CD4-positive, alpha-beta T cell (primary cell): ENCODE measurements at regions of chr16 and their contacts with region 1.

Region 1: GRCh38 chr16:2429034-2429770 is at the start of gene CCNF:
- DNase-seq: peak; percentile 96 to 99 (median 98)
- ATAC-seq: peak; percentile 97
- H3K4me3 ChIP-seq: peak within 1 kb of the TSS; percentile 81
- H3K4me3 Mint-ChIP-seq: peak within 1 kb of the TSS; percentile 93
- H3K27ac ChIP-seq: peak within 1 kb of the TSS in 1 of 2 donors; percentile 33
- H3K27ac Mint-ChIP-seq: peak within 1 kb of the TSS; percentile 62
- H3K4me1 ChIP-seq: peaks cover 19% of the 10 kb centered on the region
- H3K4me1 Mint-ChIP-seq: peaks cover 25% of the 10 kb centered on the region
- H3K27me3 ChIP-seq: no peaks in the 10 kb centered on the region
- H3K27me3 Mint-ChIP-seq: no peaks in the 10 kb centered on the region
- CTCF ChIP-seq: no peak
- total RNA-seq, gene CCNF: 0.81 to 1.3 TPM

Region 2: DNA sequence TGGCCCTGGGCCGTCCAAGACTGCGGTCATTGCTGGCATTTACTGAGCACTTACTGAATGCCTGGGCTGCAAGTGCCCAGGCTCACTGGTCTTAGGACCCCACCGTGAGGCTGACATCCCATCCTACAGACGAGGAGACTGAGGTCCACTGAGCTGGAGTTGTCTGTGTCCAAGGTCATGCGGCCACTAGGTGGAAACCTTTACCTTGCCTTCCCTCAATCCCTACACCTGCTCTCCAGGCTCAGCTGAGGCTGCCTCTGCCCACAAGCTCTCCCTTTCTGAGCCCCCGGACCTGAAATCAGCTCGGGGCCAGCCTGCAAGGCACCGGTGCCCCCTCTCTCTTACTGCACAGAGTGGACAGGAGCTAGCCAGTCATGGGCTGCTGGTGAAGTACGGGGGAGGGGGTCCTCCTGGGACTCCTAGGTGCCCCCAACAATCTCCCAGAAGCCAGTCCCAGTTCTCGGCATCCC is 234.3 kb before region 1 on chr16:
- CTCF ChIA-PET with region 1: interaction called, 3 read pairs
- POLR2A ChIA-PET with region 1: no interaction called
- intact Hi-C with region 1: loop called in 1 of 2 experiments (anchors 5 kb)
- DNase-seq: peak; percentile 24 to 83 (median 49)
- ATAC-seq: peak; percentile 82
- H3K4me3 ChIP-seq: no peak overlapping the region
- H3K4me3 Mint-ChIP-seq: peak overlapping the region; percentile 75
- H3K27ac ChIP-seq: no peak overlapping the region
- H3K27ac Mint-ChIP-seq: no peak overlapping the region
- H3K4me1 ChIP-seq: peaks cover 20% of the 10 kb centered on the region
- H3K4me1 Mint-ChIP-seq: peaks cover 10% of the 10 kb centered on the region
- H3K27me3 ChIP-seq: peaks cover 31% of the 10 kb centered on the region in 2 experiments
- H3K27me3 Mint-ChIP-seq: peaks cover 27% of the 10 kb centered on the region
- CTCF ChIP-seq: peak; percentile 53

Region 3: DNA sequence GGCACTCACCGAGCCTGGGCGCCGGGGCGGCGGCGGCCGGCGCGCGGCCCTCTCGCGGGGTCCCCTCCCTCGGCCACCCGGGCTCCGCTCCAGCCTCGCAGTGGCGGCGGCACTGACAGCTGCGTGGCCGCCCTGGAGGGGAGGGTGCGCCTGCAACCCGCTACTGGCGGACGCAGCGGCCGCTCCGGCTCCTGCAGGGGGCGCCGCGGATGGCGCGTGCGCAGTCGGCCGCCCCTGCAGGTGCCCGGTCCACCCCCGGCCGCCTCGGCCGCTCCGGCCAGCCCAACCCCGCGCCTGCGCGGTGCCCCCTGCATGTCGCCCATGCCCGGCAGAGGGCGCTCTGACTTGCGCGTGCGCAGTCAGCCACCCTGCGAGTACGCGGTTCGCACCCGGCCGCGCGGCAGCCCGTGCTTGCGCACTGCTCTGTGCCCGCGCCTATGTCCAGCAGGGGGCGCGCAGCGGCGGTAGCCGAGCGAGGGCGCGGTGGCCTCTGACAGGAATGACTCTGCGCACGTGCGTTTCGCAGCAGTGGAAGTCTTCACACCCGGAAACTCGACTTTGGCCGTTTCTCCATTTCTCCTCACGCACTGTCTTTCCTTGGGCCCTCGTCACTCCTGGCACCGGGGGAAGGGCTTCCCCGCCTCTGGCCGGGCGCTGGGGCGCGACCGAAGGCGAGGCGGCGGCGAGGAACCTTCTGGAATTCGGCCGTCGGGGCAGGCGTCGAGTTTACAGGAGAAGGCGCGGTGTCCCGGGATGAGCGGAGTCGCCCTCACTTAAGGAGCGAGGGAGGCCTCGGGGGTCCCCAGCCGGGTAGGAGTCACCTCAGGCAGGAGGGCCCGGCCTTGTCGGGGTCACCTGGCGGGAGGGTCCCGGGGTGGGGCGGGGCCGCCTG is 88.4 kb before region 1 on chr16 and contains the start of gene ABCA3:
- CTCF ChIA-PET with region 1: no interaction called
- POLR2A ChIA-PET with region 1: no interaction called
- intact Hi-C with region 1: loop called in 1 of 2 experiments (anchors 2 kb)
- DNase-seq: peak; percentile 81 to 97 (median 92)
- ATAC-seq: peak; percentile 88
- H3K4me3 ChIP-seq: peak within 1 kb of the TSS; percentile 69
- H3K4me3 Mint-ChIP-seq: peak within 1 kb of the TSS; percentile 90
- H3K27ac ChIP-seq: no peak within 1 kb of the TSS
- H3K27ac Mint-ChIP-seq: peak within 1 kb of the TSS; percentile 55
- H3K4me1 ChIP-seq: peaks cover 20% of the 10 kb centered on the region
- H3K4me1 Mint-ChIP-seq: peaks cover 17% of the 10 kb centered on the region
- H3K27me3 ChIP-seq: peaks cover 0 to 2% of the 10 kb centered on the region in 2 experiments
- H3K27me3 Mint-ChIP-seq: no peaks in the 10 kb centered on the region
- CTCF ChIP-seq: peak; percentile 97
- total RNA-seq, gene ABCA3: 7.0 to 7.7 TPM

Region 4: GRCh38 chr16:2459647-2460390 is 30.6 kb after region 1 on chr16 and contains the start of gene TEDC2:
- CTCF ChIA-PET with region 1: no interaction called
- POLR2A ChIA-PET with region 1: interaction called, 3 read pairs
- intact Hi-C with region 1: loop called in 1 of 2 experiments (anchors 2 kb)
- DNase-seq: peak; percentile 92 to 99 (median 96)
- ATAC-seq: peak; percentile 100
- H3K4me3 ChIP-seq: peak within 1 kb of the TSS; percentile 67
- H3K4me3 Mint-ChIP-seq: peak within 1 kb of the TSS; percentile 79
- H3K27ac ChIP-seq: no peak within 1 kb of the TSS
- H3K27ac Mint-ChIP-seq: no peak within 1 kb of the TSS
- H3K4me1 ChIP-seq: peaks cover 21% of the 10 kb centered on the region
- H3K4me1 Mint-ChIP-seq: peaks cover 5% of the 10 kb centered on the region
- H3K27me3 ChIP-seq: no peaks in the 10 kb centered on the region
- H3K27me3 Mint-ChIP-seq: no peaks in the 10 kb centered on the region
- CTCF ChIP-seq: no peak
- total RNA-seq, gene TEDC2: 0.17 to 0.27 TPM

Region 5: GRCh38 chr16:2474877-2475412 is 45.7 kb after region 1 on chr16 and contains the start of gene TBC1D24:
- CTCF ChIA-PET with region 1: no interaction called
- POLR2A ChIA-PET with region 1: interaction called, 3 read pairs
- intact Hi-C with region 1: loop called in 1 of 2 experiments (anchors 5 kb)
- DNase-seq: peak; percentile 50 to 87 (median 70)
- ATAC-seq: peak; percentile 48
- H3K4me3 ChIP-seq: peak within 1 kb of the TSS; percentile 60
- H3K4me3 Mint-ChIP-seq: peak within 1 kb of the TSS; percentile 84
- H3K27ac ChIP-seq: no peak within 1 kb of the TSS
- H3K27ac Mint-ChIP-seq: no peak within 1 kb of the TSS
- H3K4me1 ChIP-seq: peaks cover 37% of the 10 kb centered on the region
- H3K4me1 Mint-ChIP-seq: peaks cover 13% of the 10 kb centered on the region
- H3K27me3 ChIP-seq: peaks cover 26 to 34% of the 10 kb centered on the region in 2 experiments
- H3K27me3 Mint-ChIP-seq: peaks cover 16% of the 10 kb centered on the region
- CTCF ChIP-seq: no peak
- total RNA-seq, gene TBC1D24: 1.2 to 2.1 TPM

Region 6: DNA sequence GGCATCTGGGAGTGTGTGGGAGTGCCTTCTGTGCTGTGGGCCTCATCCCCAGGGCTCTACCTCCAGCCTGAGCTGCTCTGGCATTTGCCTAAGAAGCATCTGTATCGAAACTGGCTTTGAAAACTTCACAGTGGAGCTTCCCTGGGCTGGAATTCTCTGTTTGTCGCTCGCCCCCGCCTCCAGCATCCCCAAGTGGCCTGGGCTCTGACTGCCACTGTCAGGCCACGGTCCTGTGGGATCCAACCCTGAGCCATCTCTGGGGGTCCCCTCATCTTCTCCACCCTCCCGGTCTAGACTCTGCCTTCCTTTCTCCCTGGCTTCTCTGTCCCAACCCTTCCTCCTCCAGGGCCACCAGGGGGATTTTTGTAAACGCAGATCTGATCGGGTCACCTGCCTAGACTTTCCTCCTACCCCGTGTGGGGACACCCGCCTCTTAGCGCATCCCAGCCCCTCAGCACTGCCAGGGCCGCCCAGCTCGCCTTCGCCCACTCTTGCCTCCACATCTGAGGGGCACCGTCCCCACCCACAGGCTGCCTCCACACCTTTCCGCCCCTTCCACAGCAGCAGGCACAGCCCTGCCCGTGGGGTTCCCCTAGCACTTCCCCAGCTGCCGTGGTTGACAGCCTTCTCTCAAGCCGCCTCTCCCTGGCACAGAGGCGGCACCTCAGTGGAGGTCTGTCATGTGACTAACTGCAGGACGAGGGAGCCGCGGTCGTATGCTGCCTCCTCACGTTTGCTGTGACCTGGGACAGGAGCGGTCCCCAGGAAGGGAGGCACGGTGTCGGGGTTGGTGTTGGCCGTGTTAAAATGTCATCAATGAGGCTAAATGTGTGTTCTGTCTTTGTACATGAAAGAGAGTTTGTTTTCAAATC is 57.7 kb after region 1 on chr16:
- CTCF ChIA-PET with region 1: interaction called, 3 read pairs
- POLR2A ChIA-PET with region 1: no interaction called
- intact Hi-C with region 1: loop called (anchors 5 kb)
- DNase-seq: peak; percentile 67 to 93 (median 79)
- ATAC-seq: peak; percentile 99
- H3K4me3 ChIP-seq: no peak overlapping the region
- H3K4me3 Mint-ChIP-seq: peak overlapping the region; percentile 13
- H3K27ac ChIP-seq: no peak overlapping the region
- H3K27ac Mint-ChIP-seq: peak overlapping the region; percentile 61
- H3K4me1 ChIP-seq: peaks cover 17% of the 10 kb centered on the region
- H3K4me1 Mint-ChIP-seq: peaks cover 12% of the 10 kb centered on the region
- H3K27me3 ChIP-seq: no peaks in the 10 kb centered on the region
- H3K27me3 Mint-ChIP-seq: no peaks in the 10 kb centered on the region
- CTCF ChIP-seq: peak; percentile 65

Region 7: GRCh38 chr16:2531767-2532493 is 102.7 kb after region 1 on chr16:
- CTCF ChIA-PET with region 1: no interaction called
- POLR2A ChIA-PET with region 1: no interaction called
- intact Hi-C with region 1: loop called in 1 of 2 experiments (anchors 5 kb)
- DNase-seq: peak; percentile 92 to 99 (median 97)
- ATAC-seq: peak; percentile 86
- H3K4me3 ChIP-seq: peak overlapping the region; percentile 94
- H3K4me3 Mint-ChIP-seq: peak overlapping the region; percentile 95
- H3K27ac ChIP-seq: peak overlapping the region; percentile 94 to 95
- H3K27ac Mint-ChIP-seq: peak overlapping the region; percentile 98
- H3K4me1 ChIP-seq: peaks cover 28% of the 10 kb centered on the region
- H3K4me1 Mint-ChIP-seq: peaks cover 22% of the 10 kb centered on the region
- H3K27me3 ChIP-seq: no peaks in the 10 kb centered on the region
- H3K27me3 Mint-ChIP-seq: peaks cover 8% of the 10 kb centered on the region
- CTCF ChIP-seq: no peak

Region 8: DNA sequence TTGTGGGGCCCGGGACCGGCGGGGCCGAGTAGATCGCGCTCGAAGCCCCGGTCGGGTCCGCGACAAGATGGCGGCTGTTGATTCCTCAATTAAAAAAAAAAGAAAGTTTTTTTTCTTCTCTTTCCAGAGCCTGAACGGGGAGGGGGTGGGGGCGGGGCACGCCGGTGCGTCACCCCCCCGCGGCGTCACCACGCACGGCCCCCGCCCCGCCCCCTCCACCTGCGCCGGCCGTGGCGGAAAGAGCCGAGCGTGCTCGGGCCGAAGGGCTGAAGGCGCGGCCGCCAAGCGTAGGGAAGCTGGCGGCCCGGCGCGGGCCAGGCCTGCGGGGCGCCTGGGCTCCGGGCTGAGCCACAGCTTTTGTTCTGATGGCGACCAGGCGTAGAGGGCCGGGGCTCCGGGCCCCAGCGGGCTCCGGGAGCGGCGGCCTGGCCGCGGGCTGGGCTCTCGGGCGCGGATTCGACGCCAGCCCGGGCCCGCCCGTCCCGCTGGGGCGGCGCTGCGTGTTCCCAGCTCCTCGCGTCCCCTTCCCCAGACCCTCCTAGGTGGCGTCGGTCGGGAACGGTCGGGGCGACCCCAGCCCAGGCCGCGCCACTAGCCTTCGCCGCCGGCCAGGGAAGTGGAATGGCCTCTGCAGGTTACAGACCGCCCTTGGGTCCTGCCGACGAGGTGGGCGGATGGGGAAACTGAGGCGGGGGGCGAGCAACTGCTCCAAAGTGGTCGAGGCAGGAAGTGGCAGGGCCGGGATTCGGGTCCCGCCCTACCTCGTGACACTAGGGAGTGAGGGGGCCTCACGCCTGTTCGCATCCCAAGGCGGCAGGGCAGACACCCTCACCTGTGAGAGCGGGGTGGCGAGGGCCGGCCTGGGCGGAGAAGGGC is 1451.7 kb after region 1 on chr16 and contains the start of gene CREBBP:
- CTCF ChIA-PET with region 1: no interaction called
- POLR2A ChIA-PET with region 1: no interaction called
- intact Hi-C with region 1: no loop called
- DNase-seq: peak; percentile 70 to 97 (median 86)
- ATAC-seq: peak; percentile 79
- H3K4me3 ChIP-seq: peak within 1 kb of the TSS; percentile 91
- H3K4me3 Mint-ChIP-seq: peak within 1 kb of the TSS; percentile 93
- H3K27ac ChIP-seq: no peak within 1 kb of the TSS
- H3K27ac Mint-ChIP-seq: peak within 1 kb of the TSS; percentile 94
- H3K4me1 ChIP-seq: peaks cover 37% of the 10 kb centered on the region
- H3K4me1 Mint-ChIP-seq: peaks cover 46% of the 10 kb centered on the region
- H3K27me3 ChIP-seq: peaks cover 0 to 2% of the 10 kb centered on the region in 2 experiments
- H3K27me3 Mint-ChIP-seq: peaks cover 8% of the 10 kb centered on the region
- CTCF ChIP-seq: no peak
- total RNA-seq, gene CREBBP: 145 to 152 TPM